ENCODE measurements at regions of chr2 and their contacts with region 1.

Region 1: GRCh38 chr2:45904267-45904945 is 252.9 kb downstream of the PRKCE start:
- DNase-seq: peak; percentile 84
- H3K4me3 Mint-ChIP-seq: no peak overlapping the region
- H3K27ac Mint-ChIP-seq: peak overlapping the region; percentile 80
- H3K4me1 Mint-ChIP-seq: peaks cover 33% of the 10 kb centered on the region
- H3K27me3 Mint-ChIP-seq: no peaks in the 10 kb centered on the region

Region 2: DNA sequence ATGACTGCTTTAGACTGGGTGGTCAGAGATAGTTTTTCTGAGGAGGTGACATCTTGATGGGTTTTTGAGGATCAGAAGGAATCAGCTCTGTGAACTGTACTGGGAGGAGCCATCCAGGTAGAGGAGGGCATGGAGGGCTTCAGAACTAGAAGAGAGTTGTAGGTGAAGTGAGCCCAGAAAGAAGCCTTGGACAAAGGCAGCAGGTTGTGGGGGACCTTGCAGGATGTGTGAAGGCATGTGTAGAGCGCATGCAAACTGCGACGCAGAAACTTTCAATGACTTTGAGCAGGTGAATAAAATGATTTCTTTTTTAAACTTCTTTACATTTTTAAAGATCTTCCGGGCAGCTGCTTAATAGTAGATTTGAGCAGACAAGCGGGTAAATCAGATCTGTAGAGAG is 811.2 kb before region 1 on chr2:
- CTCF ChIA-PET with region 1: no interaction called
- POLR2A ChIA-PET with region 1: no interaction called
- intact Hi-C with region 1: no loop called
- DNase-seq: no peak
- H3K4me3 Mint-ChIP-seq: no peak overlapping the region
- H3K27ac Mint-ChIP-seq: no peak overlapping the region
- H3K4me1 Mint-ChIP-seq: no peaks in the 10 kb centered on the region
- H3K27me3 Mint-ChIP-seq: peaks cover 6% of the 10 kb centered on the region

Region 3: GRCh38 chr2:45849491-45850283 is 54.7 kb before region 1 on chr2:
- CTCF ChIA-PET with region 1: no interaction called
- POLR2A ChIA-PET with region 1: no interaction called
- intact Hi-C with region 1: loop called (anchors 1 kb)
- DNase-seq: no peak
- H3K4me3 Mint-ChIP-seq: no peak overlapping the region
- H3K27ac Mint-ChIP-seq: peak overlapping the region; percentile 23
- H3K4me1 Mint-ChIP-seq: peaks cover 25% of the 10 kb centered on the region
- H3K27me3 Mint-ChIP-seq: no peaks in the 10 kb centered on the region

Region 4: DNA sequence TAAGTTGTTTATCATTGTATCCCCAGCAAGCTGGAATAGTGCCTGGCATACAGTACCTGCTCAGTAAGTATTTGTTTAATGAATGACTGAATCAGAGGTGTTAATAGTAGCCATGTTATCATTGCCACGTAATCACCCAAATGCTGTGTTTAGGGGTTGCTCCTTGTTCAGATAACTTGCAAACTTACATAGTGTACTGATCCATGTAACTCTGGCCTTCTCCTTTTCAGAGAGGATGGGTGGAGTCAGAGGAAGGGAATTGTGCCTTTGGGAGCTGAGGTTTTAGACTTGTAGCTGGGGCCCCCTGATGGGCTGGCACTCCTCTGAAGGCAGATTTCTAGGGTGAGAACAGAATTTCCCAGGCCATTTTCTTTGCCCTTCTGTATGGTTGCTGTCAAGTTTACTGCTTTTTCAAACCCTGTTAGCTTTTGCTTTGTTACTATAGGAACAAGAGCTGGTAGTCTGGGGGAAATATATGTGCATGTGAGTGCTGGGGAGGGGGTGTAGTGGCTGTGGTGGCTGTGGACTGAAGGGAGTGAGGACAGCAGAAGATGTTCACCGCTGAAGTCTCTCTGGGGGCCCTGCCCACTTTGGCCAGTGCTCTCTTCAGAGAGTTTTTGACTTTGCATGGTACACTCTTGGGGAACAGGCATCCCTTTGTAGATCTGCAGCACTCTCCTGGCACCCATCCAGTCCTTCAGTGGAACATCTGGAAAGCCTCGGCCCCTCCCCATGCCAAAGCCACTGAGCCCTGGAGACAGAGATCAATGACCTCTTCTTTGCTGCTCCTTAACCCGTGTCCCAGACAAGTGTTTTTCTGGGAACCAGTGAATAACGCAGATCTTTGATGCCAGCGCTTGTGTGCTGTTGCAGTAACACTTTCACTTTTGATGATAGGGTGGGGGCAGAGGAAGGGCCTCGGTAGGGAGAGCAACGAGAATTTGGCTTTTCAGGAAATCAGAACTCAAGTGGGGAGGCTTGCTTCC is 44.0 kb before region 1 on chr2:
- CTCF ChIA-PET with region 1: no interaction called
- POLR2A ChIA-PET with region 1: no interaction called
- intact Hi-C with region 1: loop called (anchors 5 kb)
- DNase-seq: peak; percentile 32
- H3K4me3 Mint-ChIP-seq: peak overlapping the region; percentile 52
- H3K27ac Mint-ChIP-seq: peak overlapping the region; percentile 60
- H3K4me1 Mint-ChIP-seq: peaks cover 33% of the 10 kb centered on the region
- H3K27me3 Mint-ChIP-seq: no peaks in the 10 kb centered on the region

Region 5: GRCh38 chr2:46050489-46050888 is 146.1 kb after region 1 on chr2:
- CTCF ChIA-PET with region 1: no interaction called
- POLR2A ChIA-PET with region 1: no interaction called
- intact Hi-C with region 1: no loop called
- DNase-seq: no peak
- H3K4me3 Mint-ChIP-seq: no peak overlapping the region
- H3K27ac Mint-ChIP-seq: peak overlapping the region; percentile 33
- H3K4me1 Mint-ChIP-seq: peaks cover 28% of the 10 kb centered on the region
- H3K27me3 Mint-ChIP-seq: no peaks in the 10 kb centered on the region